ENCODE measurements at regions of chr16 and their contacts with region 1.

Region 1: DNA sequence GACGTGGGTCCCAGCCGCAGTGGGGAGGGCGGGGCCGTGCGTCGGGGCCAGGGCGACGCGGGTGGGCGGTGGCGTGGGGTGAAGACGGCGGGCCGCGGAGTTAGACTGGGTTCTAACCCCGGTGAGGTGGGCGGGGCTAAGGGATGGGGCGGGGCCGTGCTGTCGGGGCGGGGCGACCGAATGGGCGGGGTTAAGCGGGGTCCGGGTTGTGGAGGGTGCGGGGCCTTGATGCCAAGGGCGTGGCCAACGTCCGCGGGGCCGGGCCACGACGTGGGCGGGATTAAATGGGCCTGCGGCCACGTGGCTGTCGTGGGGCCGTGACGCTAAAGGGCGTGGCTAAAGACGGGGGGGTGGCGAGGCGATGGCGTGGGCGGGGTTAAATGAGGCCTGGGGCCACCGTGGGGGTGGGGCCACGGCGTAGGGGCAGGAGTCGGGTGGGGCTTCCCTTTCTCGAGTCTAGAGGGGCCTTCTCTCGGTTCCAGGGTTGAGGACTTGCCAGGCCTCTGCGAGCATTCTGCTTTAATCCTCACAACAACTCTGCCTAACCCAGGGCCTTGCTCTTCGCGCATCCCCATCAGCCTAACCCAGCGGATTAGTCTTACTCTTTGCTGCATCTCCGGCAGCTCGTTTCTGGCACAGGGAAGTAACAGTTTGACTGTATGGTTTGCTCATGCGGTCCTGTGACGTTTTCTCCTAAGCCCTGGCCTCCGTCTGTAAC is 739 bp downstream of the TCF25 start:
- DNase-seq: peak; percentile 98
- ATAC-seq: peak; percentile 84
- H3K4me3 Mint-ChIP-seq: peak overlapping the region; percentile 93
- H3K27ac Mint-ChIP-seq: peak overlapping the region; percentile 97
- H3K4me1 Mint-ChIP-seq: peaks cover 17% of the 10 kb centered on the region
- H3K27me3 Mint-ChIP-seq: no peaks in the 10 kb centered on the region
- CTCF ChIP-seq: no peak

Region 2: DNA sequence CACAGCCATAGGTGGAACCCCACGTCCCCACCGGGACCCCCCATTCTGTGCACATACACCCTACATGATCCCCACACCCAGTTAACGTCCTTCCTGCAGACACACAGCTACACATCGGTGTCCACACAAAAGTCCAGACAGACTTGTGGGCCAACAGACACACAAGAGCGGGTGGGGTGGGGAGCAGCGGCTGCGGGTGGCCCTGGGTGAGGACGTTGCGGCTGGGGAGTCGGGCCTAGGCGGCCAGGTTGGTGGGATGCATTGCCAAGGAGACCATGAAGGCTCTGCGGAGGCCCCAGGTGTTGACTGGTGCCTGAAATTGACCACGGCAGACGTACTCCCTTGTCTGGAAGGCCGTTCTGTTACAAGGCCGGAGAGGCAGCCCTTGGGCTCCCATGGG is 269.4 kb before region 1 on chr16:
- CTCF ChIA-PET with region 1: no interaction called
- POLR2A ChIA-PET with region 1: interaction called, 15 read pairs
- intact Hi-C with region 1: no loop called
- DNase-seq: no peak
- ATAC-seq: no peak
- H3K4me3 Mint-ChIP-seq: no peak overlapping the region
- H3K27ac Mint-ChIP-seq: no peak overlapping the region
- H3K4me1 Mint-ChIP-seq: peaks cover 8% of the 10 kb centered on the region
- H3K27me3 Mint-ChIP-seq: peaks cover 5% of the 10 kb centered on the region
- CTCF ChIP-seq: no peak

Region 3: GRCh38 chr16:89700100-89700648 is 174.0 kb before region 1 on chr16:
- CTCF ChIA-PET with region 1: no interaction called
- POLR2A ChIA-PET with region 1: interaction called, 22 read pairs
- intact Hi-C with region 1: loop called (anchors 1 kb)
- DNase-seq: peak; percentile 93
- ATAC-seq: peak; percentile 27
- H3K4me3 Mint-ChIP-seq: peak overlapping the region; percentile 83
- H3K27ac Mint-ChIP-seq: peak overlapping the region; percentile 74
- H3K4me1 Mint-ChIP-seq: peaks cover 27% of the 10 kb centered on the region
- H3K27me3 Mint-ChIP-seq: no peaks in the 10 kb centered on the region
- CTCF ChIP-seq: no peak

Region 4: GRCh38 chr16:89815639-89816348 is 58.3 kb before region 1 on chr16:
- CTCF ChIA-PET with region 1: no interaction called
- POLR2A ChIA-PET with region 1: interaction called, 4 read pairs
- intact Hi-C with region 1: loop called (anchors 1 kb)
- DNase-seq: no peak
- ATAC-seq: no peak
- H3K4me3 Mint-ChIP-seq: peak overlapping the region; percentile 87
- H3K27ac Mint-ChIP-seq: peak overlapping the region; percentile 66
- H3K4me1 Mint-ChIP-seq: peaks cover 19% of the 10 kb centered on the region
- H3K27me3 Mint-ChIP-seq: no peaks in the 10 kb centered on the region
- CTCF ChIP-seq: no peak

Region 5: DNA sequence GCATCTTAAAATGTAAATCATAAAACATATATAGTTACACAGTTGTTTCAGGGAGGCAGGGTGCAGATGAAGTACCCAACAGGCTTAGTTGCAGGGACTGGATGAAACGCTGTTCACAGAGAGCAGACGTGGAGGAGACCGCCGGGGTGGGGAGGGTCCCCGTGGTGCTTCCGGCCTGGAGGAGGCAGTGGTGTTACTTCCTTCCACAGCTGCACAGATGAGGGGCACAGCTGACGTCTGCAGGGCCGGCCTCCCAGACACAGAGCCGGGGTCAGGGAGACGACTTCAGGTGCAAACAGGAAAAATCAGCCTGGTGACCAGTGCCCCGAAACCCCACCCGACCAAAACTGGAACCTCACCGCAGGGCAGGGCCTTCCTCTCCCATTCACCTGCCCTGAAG is 28.7 kb before region 1 on chr16:
- CTCF ChIA-PET with region 1: no interaction called
- POLR2A ChIA-PET with region 1: no interaction called
- intact Hi-C with region 1: no loop called
- DNase-seq: no peak
- ATAC-seq: peak; percentile 21
- H3K4me3 Mint-ChIP-seq: peak overlapping the region; percentile 28
- H3K27ac Mint-ChIP-seq: no peak overlapping the region
- H3K4me1 Mint-ChIP-seq: peaks cover 12% of the 10 kb centered on the region
- H3K27me3 Mint-ChIP-seq: no peaks in the 10 kb centered on the region
- CTCF ChIP-seq: no peak

Region 6: DNA sequence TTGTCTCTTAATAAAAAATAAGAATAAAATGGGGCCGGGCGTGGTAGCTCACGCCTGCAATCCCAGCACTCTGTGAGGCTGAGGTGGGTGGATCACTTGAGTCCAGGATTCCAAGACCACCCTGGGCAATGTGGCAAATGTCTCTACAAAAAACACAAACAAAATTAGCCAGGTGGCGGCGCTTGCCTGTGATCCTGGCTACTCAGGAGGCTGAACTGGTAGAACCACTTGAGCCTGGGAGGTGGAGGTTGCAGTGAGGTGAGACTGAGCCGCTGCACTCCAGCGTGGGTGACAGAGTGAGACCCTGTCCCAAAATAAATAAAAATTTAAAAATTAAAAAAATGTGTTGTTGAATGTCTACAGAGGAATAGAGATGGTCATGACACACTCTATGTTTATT is 71.5 kb after region 1 on chr16:
- CTCF ChIA-PET with region 1: no interaction called
- POLR2A ChIA-PET with region 1: interaction called, 21 read pairs
- intact Hi-C with region 1: loop called (anchors 1 kb)
- DNase-seq: no peak
- ATAC-seq: no peak
- H3K4me3 Mint-ChIP-seq: no peak overlapping the region
- H3K27ac Mint-ChIP-seq: no peak overlapping the region
- H3K4me1 Mint-ChIP-seq: peaks cover 46% of the 10 kb centered on the region
- H3K27me3 Mint-ChIP-seq: peaks cover 8% of the 10 kb centered on the region
- CTCF ChIP-seq: no peak

Measured in activated B cell treated with CpG ODN at 0.5 μM for 24 hours (primary cell).